ENCODE measurements at regions of chr2 and their contacts with region 1.

Region 1: GRCh38 chr2:168346725-168347477 is 99.5 kb upstream of the STK39 start:
- DNase-seq: peak; percentile 78
- ATAC-seq: peak; percentile 77
- H3K4me3 ChIP-seq: peak overlapping the region; percentile 78
- H3K27ac ChIP-seq: no peak overlapping the region
- H3K4me1 ChIP-seq: peaks cover 9% of the 10 kb centered on the region
- H3K27me3 ChIP-seq: no peaks in the 10 kb centered on the region
- CTCF ChIP-seq: peak; percentile 91

Region 2: DNA sequence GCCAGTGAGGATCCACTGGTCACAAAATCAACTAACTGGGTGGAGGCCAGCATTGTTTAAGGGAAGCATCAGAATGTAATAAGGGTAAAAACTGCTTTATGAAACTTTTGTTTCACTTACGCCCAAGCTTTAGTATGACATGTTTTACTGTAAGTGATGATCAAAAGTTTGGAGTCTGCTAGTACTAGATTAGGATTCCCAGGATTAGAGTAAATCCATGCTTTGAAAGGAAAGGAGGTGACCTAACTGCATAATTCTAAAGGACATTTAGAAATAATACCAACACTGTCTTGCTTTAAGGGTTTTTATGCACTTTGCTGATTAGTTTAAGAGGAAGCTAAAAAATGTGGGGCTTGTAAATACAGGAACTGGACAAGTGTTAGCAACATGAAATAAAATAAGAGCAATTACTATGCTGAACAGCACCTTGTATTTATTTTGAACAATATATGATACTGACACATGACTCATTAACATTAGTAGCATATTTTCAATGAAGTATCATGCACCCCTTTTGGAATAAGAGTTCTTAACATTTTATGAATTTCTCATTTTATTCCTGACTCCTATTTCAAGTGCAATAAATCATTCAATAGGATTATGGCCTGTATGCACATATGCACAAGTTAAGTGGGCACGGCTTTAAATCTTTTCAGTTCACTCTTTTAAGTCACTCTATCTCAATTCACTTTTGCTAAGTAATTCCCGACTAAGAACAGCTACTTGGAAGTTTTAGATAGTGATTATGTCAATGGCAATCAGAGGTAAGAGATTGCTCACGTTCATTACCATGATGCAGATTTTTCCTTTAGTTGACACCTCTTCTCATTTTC is 162.0 kb before region 1 on chr2:
- CTCF ChIA-PET with region 1: no interaction called
- POLR2A ChIA-PET with region 1: no interaction called
- intact Hi-C with region 1: no loop called
- DNase-seq: no peak
- ATAC-seq: no peak
- H3K4me3 ChIP-seq: no peak overlapping the region
- H3K27ac ChIP-seq: no peak overlapping the region
- H3K4me1 ChIP-seq: peaks cover 67% of the 10 kb centered on the region
- H3K27me3 ChIP-seq: no peaks in the 10 kb centered on the region
- CTCF ChIP-seq: no peak

Region 3: DNA sequence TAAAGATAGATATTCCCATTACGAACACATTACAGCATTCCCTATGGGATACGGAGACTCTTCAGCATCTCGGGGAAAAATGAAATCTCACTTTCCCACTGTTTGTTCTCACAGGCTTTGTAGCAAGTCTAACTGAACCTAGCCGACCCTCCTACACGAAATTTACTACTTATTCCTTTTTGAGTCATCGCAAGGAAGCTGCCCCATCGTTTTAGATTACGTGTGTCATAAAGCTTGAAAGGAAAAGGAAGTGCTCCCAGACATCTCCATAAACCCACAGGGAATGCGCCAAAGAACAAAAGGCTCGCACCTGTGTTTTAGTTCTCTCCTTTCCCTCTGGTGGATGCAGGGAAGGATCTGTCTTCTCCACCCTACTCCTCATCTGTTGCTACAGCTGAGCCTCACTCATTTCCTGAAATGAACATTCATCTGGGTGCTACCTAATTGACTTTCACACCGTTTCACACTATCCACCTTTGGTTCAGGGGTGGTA is 23.3 kb before region 1 on chr2:
- CTCF ChIA-PET with region 1: no interaction called
- POLR2A ChIA-PET with region 1: no interaction called
- intact Hi-C with region 1: no loop called
- DNase-seq: no peak
- ATAC-seq: no peak
- H3K4me3 ChIP-seq: no peak overlapping the region
- H3K27ac ChIP-seq: no peak overlapping the region
- H3K4me1 ChIP-seq: peaks cover 12% of the 10 kb centered on the region
- H3K27me3 ChIP-seq: no peaks in the 10 kb centered on the region
- CTCF ChIP-seq: no peak

Region 4: GRCh38 chr2:168455648-168456520 is 109.0 kb after region 1 on chr2 and contains the start of gene CERS6:
- CTCF ChIA-PET with region 1: no interaction called
- POLR2A ChIA-PET with region 1: no interaction called
- intact Hi-C with region 1: loop called (anchors 2 kb)
- DNase-seq: peak; percentile 93
- ATAC-seq: peak; percentile 93
- H3K4me3 ChIP-seq: peak within 1 kb of the TSS; percentile 77
- H3K27ac ChIP-seq: peak within 1 kb of the TSS; percentile 12; the same call in 1 of the 2 replicates
- H3K4me1 ChIP-seq: peaks cover 18% of the 10 kb centered on the region
- H3K27me3 ChIP-seq: no peaks in the 10 kb centered on the region
- CTCF ChIP-seq: no peak
- total RNA-seq, gene CERS6: 24.2 and 25.9 TPM in 2 replicates

Region 5: GRCh38 chr2:168500516-168500915 is 153.6 kb after region 1 on chr2:
- CTCF ChIA-PET with region 1: no interaction called
- POLR2A ChIA-PET with region 1: no interaction called
- intact Hi-C with region 1: no loop called
- DNase-seq: no peak
- ATAC-seq: no peak
- H3K4me3 ChIP-seq: no peak overlapping the region
- H3K27ac ChIP-seq: no peak overlapping the region
- H3K4me1 ChIP-seq: no peaks in the 10 kb centered on the region
- H3K27me3 ChIP-seq: no peaks in the 10 kb centered on the region
- CTCF ChIP-seq: no peak

Region 6: DNA sequence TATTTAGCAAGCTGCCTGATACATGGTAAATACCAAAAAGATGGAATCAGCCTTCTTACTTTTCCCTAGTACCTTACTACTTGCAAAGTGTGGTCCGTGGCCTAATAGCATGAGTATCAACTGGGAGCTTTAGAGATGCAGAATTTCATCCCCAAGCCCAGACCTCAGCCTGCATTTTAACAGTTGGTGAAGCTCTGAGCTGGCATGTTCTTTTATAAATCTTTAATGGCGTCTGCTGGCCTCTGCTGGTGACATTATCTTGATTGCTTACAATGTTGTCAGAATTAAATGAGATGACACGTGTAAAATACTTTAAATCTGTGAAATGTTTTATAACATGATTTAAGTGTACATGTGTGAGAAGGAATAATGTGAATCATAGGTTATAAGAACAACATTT is 340.4 kb after region 1 on chr2:
- CTCF ChIA-PET with region 1: interaction called, 3 read pairs
- POLR2A ChIA-PET with region 1: no interaction called
- intact Hi-C with region 1: loop called (anchors 1 kb)
- DNase-seq: peak; percentile 25
- ATAC-seq: peak; percentile 46
- H3K4me3 ChIP-seq: no peak overlapping the region
- H3K27ac ChIP-seq: no peak overlapping the region
- H3K4me1 ChIP-seq: peaks cover 10% of the 10 kb centered on the region; the same call in 1 of the 2 replicates
- H3K27me3 ChIP-seq: no peaks in the 10 kb centered on the region
- CTCF ChIP-seq: peak; percentile 51

Region 7: GRCh38 chr2:168699844-168700417 is 353.0 kb after region 1 on chr2:
- CTCF ChIA-PET with region 1: no interaction called
- POLR2A ChIA-PET with region 1: no interaction called
- intact Hi-C with region 1: loop called (anchors 1 kb)
- DNase-seq: no peak
- ATAC-seq: no peak
- H3K4me3 ChIP-seq: no peak overlapping the region
- H3K27ac ChIP-seq: no peak overlapping the region
- H3K4me1 ChIP-seq: no peaks in the 10 kb centered on the region
- H3K27me3 ChIP-seq: no peaks in the 10 kb centered on the region
- CTCF ChIP-seq: no peak

Region 8: GRCh38 chr2:168758970-168759820 is 412.3 kb after region 1 on chr2:
- CTCF ChIA-PET with region 1: no interaction called
- POLR2A ChIA-PET with region 1: no interaction called
- intact Hi-C with region 1: loop called (anchors 1 kb)
- DNase-seq: peak; percentile 71
- ATAC-seq: peak; percentile 92
- H3K4me3 ChIP-seq: no peak overlapping the region
- H3K27ac ChIP-seq: no peak overlapping the region
- H3K4me1 ChIP-seq: no peaks in the 10 kb centered on the region
- H3K27me3 ChIP-seq: no peaks in the 10 kb centered on the region
- CTCF ChIP-seq: peak; percentile 73

Region 9: GRCh38 chr2:168920504-168921157 is 573.7 kb after region 1 on chr2:
- CTCF ChIA-PET with region 1: no interaction called
- POLR2A ChIA-PET with region 1: no interaction called
- intact Hi-C with region 1: loop called (anchors 1 kb)
- DNase-seq: peak; percentile 73
- ATAC-seq: peak; percentile 33; the same call in 1 of the 2 replicates
- H3K4me3 ChIP-seq: no peak overlapping the region
- H3K27ac ChIP-seq: no peak overlapping the region
- H3K4me1 ChIP-seq: no peaks in the 10 kb centered on the region
- H3K27me3 ChIP-seq: peaks cover 42% of the 10 kb centered on the region; the same call in 1 of the 2 replicates
- CTCF ChIP-seq: peak; percentile 76